ENCODE measurements at regions of chr7 and their contacts with region 1.

Region 1: GRCh38 chr7:116525913-116526861 is 1.4 kb downstream of the CAV1 start:
- DNase-seq: peak; percentile 50 to 67 (median 63)
- H3K4me3 ChIP-seq: peak overlapping the region in 1 of 2 donors; percentile 35
- H3K4me3 Mint-ChIP-seq: peak overlapping the region; percentile 80 to 94 (median 87)
- H3K27ac ChIP-seq: no peak overlapping the region
- H3K27ac Mint-ChIP-seq: no peak overlapping the region
- H3K4me1 ChIP-seq: peaks cover 22% of the 10 kb centered on the region
- H3K4me1 Mint-ChIP-seq: peaks cover 12 to 30% (median 22%) of the 10 kb centered on the region in 4 donors
- H3K27me3 ChIP-seq: peaks cover 29% of the 10 kb centered on the region
- H3K27me3 Mint-ChIP-seq: peaks cover 53 to 60% of the 10 kb centered on the region in 2 donors

Region 2: DNA sequence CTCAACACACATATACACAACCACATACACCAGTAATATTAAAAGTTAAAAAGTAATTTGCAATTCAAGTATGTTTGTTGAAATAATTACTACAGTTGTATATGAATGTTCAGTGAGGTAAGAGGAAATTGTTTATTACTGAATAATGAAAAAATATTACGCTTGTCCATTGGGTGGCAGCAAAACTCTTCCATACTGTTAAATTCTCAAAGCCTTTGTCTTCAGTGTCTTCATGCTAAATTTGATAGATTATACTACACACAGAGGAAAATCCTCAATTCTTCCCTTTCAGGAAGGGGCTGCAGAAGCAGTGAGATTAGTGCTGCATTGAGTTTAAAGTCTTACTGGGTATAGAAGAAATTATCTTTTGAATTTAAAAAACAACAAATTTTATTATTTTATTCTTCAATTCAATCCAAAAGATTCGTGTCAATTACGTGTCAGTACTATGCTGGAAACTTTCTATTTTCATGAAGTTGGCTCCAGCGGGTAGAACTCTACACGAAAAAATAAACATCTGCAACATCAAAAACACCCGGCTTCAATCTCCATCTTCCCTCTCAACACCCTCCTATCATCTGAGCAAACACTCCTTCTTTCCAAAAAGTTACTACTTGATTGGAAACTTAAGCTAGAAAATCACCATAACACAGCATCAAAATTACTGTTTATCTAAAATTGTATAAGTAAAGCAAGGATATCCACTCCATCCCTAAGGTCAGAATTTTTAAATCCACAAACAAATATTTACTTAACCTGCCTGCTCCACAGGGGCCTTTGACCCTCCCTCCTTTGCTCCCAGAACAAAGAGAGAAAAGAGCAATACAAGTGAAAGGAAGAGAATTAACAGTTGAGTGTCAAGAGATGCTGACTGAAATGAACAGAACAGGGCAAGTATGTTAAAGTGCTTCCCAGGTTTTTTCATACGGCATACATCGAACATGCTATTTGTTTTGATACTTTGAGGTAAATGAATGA is 352.8 kb before region 1 on chr7:
- CTCF ChIA-PET with region 1: interaction called, 19 read pairs
- POLR2A ChIA-PET with region 1: no interaction called
- intact Hi-C with region 1: loop called (anchors 1 kb)
- DNase-seq: peak in 4 of 5 donors; percentile 52 to 65 (median 60)
- H3K4me3 ChIP-seq: no peak overlapping the region
- H3K4me3 Mint-ChIP-seq: no peak overlapping the region
- H3K27ac ChIP-seq: no peak overlapping the region
- H3K27ac Mint-ChIP-seq: no peak overlapping the region
- H3K4me1 ChIP-seq: no peaks in the 10 kb centered on the region
- H3K4me1 Mint-ChIP-seq: no peaks in the 10 kb centered on the region
- H3K27me3 ChIP-seq: no peaks in the 10 kb centered on the region
- H3K27me3 Mint-ChIP-seq: peaks cover 10 to 11% of the 10 kb centered on the region in 2 donors

Region 3: GRCh38 chr7:116258734-116259133 is 267.5 kb before region 1 on chr7:
- CTCF ChIA-PET with region 1: interaction called, 67 read pairs
- POLR2A ChIA-PET with region 1: interaction called, 6 read pairs
- intact Hi-C with region 1: loop called (anchors 1 kb)
- DNase-seq: peak in 4 of 5 donors; percentile 31 to 51 (median 40)
- H3K4me3 ChIP-seq: no peak overlapping the region
- H3K4me3 Mint-ChIP-seq: no peak overlapping the region
- H3K27ac ChIP-seq: no peak overlapping the region
- H3K27ac Mint-ChIP-seq: peak overlapping the region in 5 of 7 donors; percentile 2 to 72 (median 58)
- H3K4me1 ChIP-seq: no peaks in the 10 kb centered on the region
- H3K4me1 Mint-ChIP-seq: peaks cover 2 to 11% (median 7%) of the 10 kb centered on the region in 4 donors
- H3K27me3 ChIP-seq: no peaks in the 10 kb centered on the region
- H3K27me3 Mint-ChIP-seq: no peaks in the 10 kb centered on the region

Region 4: DNA sequence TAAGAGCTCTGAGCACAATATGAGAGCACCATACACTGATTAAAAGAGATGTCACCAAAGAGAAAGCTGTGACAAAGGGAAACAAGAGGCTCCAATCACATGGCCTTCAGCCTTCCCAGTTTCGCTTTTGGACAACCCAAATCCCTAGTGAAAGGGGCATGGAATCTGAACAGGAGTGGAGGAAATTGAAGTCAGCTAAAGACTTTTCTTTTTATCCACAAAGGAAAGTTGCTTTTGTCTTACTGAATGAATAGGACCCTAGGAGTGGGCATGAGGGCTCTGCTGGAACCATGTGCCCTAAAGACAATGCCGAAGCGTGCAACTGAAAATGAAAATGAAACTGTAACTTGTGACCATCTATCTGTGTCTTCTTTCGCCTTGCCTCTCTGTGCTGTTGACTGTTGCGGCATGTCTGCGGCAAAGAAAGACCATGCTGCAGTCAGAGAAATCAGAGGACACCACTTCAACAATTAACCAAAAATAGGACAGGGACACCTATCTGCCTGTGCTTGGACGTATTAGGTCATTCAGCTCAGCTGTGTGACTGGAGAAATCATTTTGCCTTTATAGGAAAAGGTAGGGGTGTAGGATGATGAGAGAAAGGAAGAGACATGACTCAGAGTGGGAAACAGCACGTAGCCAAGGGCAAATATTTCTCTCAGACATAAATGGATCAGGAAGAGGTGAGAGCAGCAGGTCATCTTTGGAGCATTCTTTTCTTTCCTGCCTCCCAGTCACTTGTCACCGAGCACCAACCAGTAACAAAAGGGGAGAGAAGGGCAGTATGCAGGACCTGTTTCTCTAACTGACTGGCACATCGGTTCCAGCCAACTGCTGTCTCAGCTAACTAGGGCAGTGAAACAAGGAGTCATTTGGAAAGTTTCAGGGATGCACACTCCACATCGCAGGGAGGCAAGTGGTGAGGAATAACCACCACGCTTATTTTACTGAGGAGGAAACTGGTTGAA is 14.4 kb before region 1 on chr7:
- CTCF ChIA-PET with region 1: interaction called, 10 read pairs
- POLR2A ChIA-PET with region 1: no interaction called
- intact Hi-C with region 1: loop called (anchors 2 kb)
- DNase-seq: peak in 4 of 5 donors; percentile 38 to 52 (median 46)
- H3K4me3 ChIP-seq: peak overlapping the region; percentile 6 to 67
- H3K4me3 Mint-ChIP-seq: peak overlapping the region; percentile 85 to 93 (median 90)
- H3K27ac ChIP-seq: peak overlapping the region; percentile 38
- H3K27ac Mint-ChIP-seq: peak overlapping the region; percentile 12 to 94 (median 83)
- H3K4me1 ChIP-seq: peaks cover 15% of the 10 kb centered on the region
- H3K4me1 Mint-ChIP-seq: peaks cover 13 to 18% (median 17%) of the 10 kb centered on the region in 4 donors
- H3K27me3 ChIP-seq: no peaks in the 10 kb centered on the region
- H3K27me3 Mint-ChIP-seq: peaks cover 6 to 10% of the 10 kb centered on the region in 2 donors

Region 5: GRCh38 chr7:116543664-116544063 is 17.5 kb after region 1 on chr7:
- CTCF ChIA-PET with region 1: interaction called, 10 read pairs
- POLR2A ChIA-PET with region 1: no interaction called
- intact Hi-C with region 1: no loop called
- DNase-seq: no peak
- H3K4me3 ChIP-seq: no peak overlapping the region
- H3K4me3 Mint-ChIP-seq: no peak overlapping the region
- H3K27ac ChIP-seq: no peak overlapping the region
- H3K27ac Mint-ChIP-seq: no peak overlapping the region
- H3K4me1 ChIP-seq: no peaks in the 10 kb centered on the region
- H3K4me1 Mint-ChIP-seq: no peaks in the 10 kb centered on the region
- H3K27me3 ChIP-seq: no peaks in the 10 kb centered on the region
- H3K27me3 Mint-ChIP-seq: peaks cover 14 to 23% of the 10 kb centered on the region in 2 donors

Region 6: DNA sequence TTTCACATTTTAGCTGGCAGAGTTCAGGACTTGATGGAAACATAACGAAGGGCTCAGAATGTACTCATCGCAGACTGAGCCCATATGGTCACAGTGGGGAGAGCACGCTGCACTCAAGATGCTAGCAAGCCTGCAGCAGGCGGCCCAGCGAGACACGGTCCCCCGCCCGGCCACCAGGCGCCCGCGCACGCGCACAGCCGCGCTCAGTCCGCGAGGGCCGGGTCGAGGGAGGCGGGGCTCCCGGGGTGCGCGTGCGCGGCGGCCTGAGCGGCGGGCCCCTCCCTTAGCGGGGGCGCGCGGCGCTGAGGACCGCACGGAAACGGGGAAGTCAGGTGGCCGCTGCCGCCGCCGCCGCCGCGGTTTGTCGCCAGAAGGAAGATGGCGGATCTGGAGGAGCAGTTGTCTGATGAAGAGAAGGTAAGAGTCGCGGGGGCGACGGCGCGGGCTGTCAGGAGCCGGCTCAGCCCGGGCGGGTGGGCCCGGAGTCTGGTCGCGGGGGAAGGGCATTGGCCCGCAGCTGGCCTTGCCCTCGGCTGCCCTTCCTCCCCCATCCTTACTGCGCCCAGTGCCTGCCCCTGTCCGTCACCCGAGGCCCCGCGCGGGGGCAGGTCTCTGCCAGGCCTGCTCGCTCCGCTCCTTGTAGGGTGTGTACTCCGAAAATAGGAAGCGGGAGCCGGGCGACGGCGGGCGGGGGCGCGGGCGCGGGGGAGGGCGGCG is 336.2 kb after region 1 on chr7 and contains the start of gene CAPZA2:
- CTCF ChIA-PET with region 1: no interaction called
- POLR2A ChIA-PET with region 1: no interaction called
- intact Hi-C with region 1: loop called (anchors 10 kb)
- DNase-seq: peak; percentile 90 to 97 (median 95)
- H3K4me3 ChIP-seq: peak within 1 kb of the TSS; percentile 72 to 81
- H3K4me3 Mint-ChIP-seq: peak within 1 kb of the TSS; percentile 93 to 99 (median 97)
- H3K27ac ChIP-seq: peak within 1 kb of the TSS; percentile 80
- H3K27ac Mint-ChIP-seq: peak within 1 kb of the TSS; percentile 83 to 98 (median 97)
- H3K4me1 ChIP-seq: peaks cover 47% of the 10 kb centered on the region
- H3K4me1 Mint-ChIP-seq: peaks cover 31 to 56% (median 46%) of the 10 kb centered on the region in 4 donors
- H3K27me3 ChIP-seq: no peaks in the 10 kb centered on the region
- H3K27me3 Mint-ChIP-seq: peaks cover under 1 to 4% of the 10 kb centered on the region in 2 donors
- total RNA-seq, gene CAPZA2: 112 to 116 TPM

Measured in CD4-positive, alpha-beta memory T cell (primary cell).